CD8-positive, alpha-beta T cell (primary cell): ENCODE measurements at regions of chr4 and their contacts with region 1.

Region 1: GRCh38 chr4:139530833-139531427 is 25.1 kb downstream of the SETD7 start:
- DNase-seq: peak; percentile 34 to 74 (median 63)
- ATAC-seq: peak; percentile 70
- H3K4me3 ChIP-seq: no peak overlapping the region
- H3K4me3 Mint-ChIP-seq: no peak overlapping the region
- H3K27ac ChIP-seq: no peak overlapping the region
- H3K27ac Mint-ChIP-seq: no peak overlapping the region
- H3K4me1 ChIP-seq: no peaks in the 10 kb centered on the region
- H3K4me1 Mint-ChIP-seq: peaks cover 14% of the 10 kb centered on the region
- H3K27me3 ChIP-seq: no peaks in the 10 kb centered on the region
- H3K27me3 Mint-ChIP-seq: no peaks in the 10 kb centered on the region
- CTCF ChIP-seq: peak; percentile 79

Region 2: GRCh38 chr4:139099366-139099982 is 431.5 kb before region 1 on chr4:
- CTCF ChIA-PET with region 1: no interaction called
- POLR2A ChIA-PET with region 1: no interaction called
- intact Hi-C with region 1: loop called (anchors 2 kb)
- DNase-seq: peak; percentile 37 to 89 (median 75)
- ATAC-seq: peak; percentile 80
- H3K4me3 ChIP-seq: no peak overlapping the region
- H3K4me3 Mint-ChIP-seq: no peak overlapping the region
- H3K27ac ChIP-seq: no peak overlapping the region
- H3K27ac Mint-ChIP-seq: no peak overlapping the region
- H3K4me1 ChIP-seq: no peaks in the 10 kb centered on the region
- H3K4me1 Mint-ChIP-seq: peaks cover 2% of the 10 kb centered on the region
- H3K27me3 ChIP-seq: no peaks in the 10 kb centered on the region
- H3K27me3 Mint-ChIP-seq: no peaks in the 10 kb centered on the region
- CTCF ChIP-seq: peak; percentile 76

Region 3: DNA sequence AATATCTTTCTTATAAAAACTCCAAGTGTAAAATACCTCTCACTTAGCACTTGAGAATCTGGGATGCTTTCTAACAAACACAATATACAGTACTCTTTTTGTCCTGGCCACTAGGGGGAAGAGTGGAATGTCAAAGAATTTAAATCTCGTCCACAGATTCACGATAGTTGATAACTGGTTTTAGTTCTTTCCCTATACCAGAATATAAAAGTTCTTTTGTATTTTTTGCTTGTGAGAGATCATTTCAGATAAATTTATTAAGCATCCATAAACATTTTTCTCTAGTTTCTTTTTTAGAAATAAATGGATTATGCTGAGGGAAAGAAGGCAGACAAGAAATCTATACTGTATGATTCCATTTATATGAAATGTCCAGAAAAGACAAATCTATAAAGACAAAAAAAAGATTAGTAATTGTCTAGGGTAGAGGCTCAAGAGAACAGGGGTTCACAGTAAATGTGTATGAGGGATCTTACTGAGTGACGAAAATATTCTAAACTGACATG is 301.3 kb before region 1 on chr4:
- CTCF ChIA-PET with region 1: no interaction called
- POLR2A ChIA-PET with region 1: no interaction called
- intact Hi-C with region 1: loop called (anchors 2 to 5 kb)
- DNase-seq: peak in 3 of 9 experiments; percentile 7 to 74 (median 64)
- ATAC-seq: peak; percentile 70
- H3K4me3 ChIP-seq: no peak overlapping the region
- H3K4me3 Mint-ChIP-seq: no peak overlapping the region
- H3K27ac ChIP-seq: no peak overlapping the region
- H3K27ac Mint-ChIP-seq: no peak overlapping the region
- H3K4me1 ChIP-seq: no peaks in the 10 kb centered on the region
- H3K4me1 Mint-ChIP-seq: no peaks in the 10 kb centered on the region
- H3K27me3 ChIP-seq: no peaks in the 10 kb centered on the region
- H3K27me3 Mint-ChIP-seq: no peaks in the 10 kb centered on the region
- CTCF ChIP-seq: peak; percentile 72

Region 4: GRCh38 chr4:139416073-139416673 is 114.8 kb before region 1 on chr4:
- CTCF ChIA-PET with region 1: interaction called, 15 read pairs
- POLR2A ChIA-PET with region 1: no interaction called
- intact Hi-C with region 1: loop called (anchors 1 kb)
- DNase-seq: peak in 3 of 9 experiments; percentile 28 to 73 (median 64)
- ATAC-seq: peak; percentile 58
- H3K4me3 ChIP-seq: no peak overlapping the region
- H3K4me3 Mint-ChIP-seq: no peak overlapping the region
- H3K27ac ChIP-seq: no peak overlapping the region
- H3K27ac Mint-ChIP-seq: no peak overlapping the region
- H3K4me1 ChIP-seq: no peaks in the 10 kb centered on the region
- H3K4me1 Mint-ChIP-seq: peaks cover 12% of the 10 kb centered on the region
- H3K27me3 ChIP-seq: no peaks in the 10 kb centered on the region
- H3K27me3 Mint-ChIP-seq: no peaks in the 10 kb centered on the region
- CTCF ChIP-seq: peak; percentile 81

Region 5: GRCh38 chr4:139547979-139548378 is 17.0 kb after region 1 on chr4:
- CTCF ChIA-PET with region 1: interaction called, 12 read pairs
- POLR2A ChIA-PET with region 1: no interaction called
- intact Hi-C with region 1: no loop called
- DNase-seq: no peak
- ATAC-seq: no peak
- H3K4me3 ChIP-seq: no peak overlapping the region
- H3K4me3 Mint-ChIP-seq: no peak overlapping the region
- H3K27ac ChIP-seq: no peak overlapping the region
- H3K27ac Mint-ChIP-seq: no peak overlapping the region
- H3K4me1 ChIP-seq: no peaks in the 10 kb centered on the region
- H3K4me1 Mint-ChIP-seq: no peaks in the 10 kb centered on the region
- H3K27me3 ChIP-seq: no peaks in the 10 kb centered on the region
- H3K27me3 Mint-ChIP-seq: no peaks in the 10 kb centered on the region
- CTCF ChIP-seq: no peak

Region 6: DNA sequence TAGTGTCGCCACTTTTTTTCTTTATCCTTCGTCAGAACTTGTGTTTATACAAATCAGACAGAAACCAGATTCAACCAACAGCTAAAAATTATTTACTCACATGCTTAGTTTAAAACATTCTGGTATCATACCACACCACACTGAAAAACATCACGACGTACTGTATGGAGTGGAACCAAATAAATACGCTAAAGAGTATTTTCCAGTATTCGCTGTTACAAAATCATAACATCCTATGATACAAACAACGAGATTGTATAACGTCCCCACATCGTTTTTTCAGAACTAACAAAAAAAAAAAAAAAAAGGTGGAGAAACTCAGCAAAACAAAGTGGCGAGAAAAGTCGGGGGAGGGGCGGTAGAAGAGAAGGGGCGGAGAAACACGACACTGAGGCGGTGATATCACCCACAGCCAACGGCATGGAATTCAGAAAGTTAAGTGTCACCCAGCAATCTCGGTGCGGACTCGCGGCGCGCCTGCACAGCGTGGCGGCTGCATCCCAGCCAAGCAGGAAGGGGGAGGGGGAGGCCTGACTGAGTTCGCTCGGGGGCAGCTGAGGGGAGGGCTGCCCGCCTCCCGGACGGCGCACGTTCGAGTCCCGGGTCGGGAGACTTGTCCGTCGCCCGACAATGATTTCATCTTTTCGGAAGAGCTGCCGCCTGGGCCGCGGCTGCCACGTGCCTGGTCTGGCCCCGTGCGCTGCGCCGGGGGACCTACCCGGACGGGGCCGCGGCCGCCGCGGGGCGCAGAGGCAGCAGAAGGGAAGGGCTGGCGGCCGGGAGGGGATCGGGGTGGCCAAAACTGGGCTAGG is 24.2 kb after region 1 on chr4:
- CTCF ChIA-PET with region 1: interaction called, 6 read pairs
- POLR2A ChIA-PET with region 1: interaction called, 4 read pairs
- intact Hi-C with region 1: loop called in 1 of 2 experiments (anchors 2 kb)
- DNase-seq: peak; percentile 43 to 89 (median 74)
- ATAC-seq: peak; percentile 75
- H3K4me3 ChIP-seq: peak overlapping the region; percentile 79 to 84
- H3K4me3 Mint-ChIP-seq: peak overlapping the region; percentile 94
- H3K27ac ChIP-seq: peak overlapping the region in 1 of 2 experiments; percentile 53
- H3K27ac Mint-ChIP-seq: peak overlapping the region; percentile 95
- H3K4me1 ChIP-seq: peaks cover 9% of the 10 kb centered on the region
- H3K4me1 Mint-ChIP-seq: peaks cover 31% of the 10 kb centered on the region
- H3K27me3 ChIP-seq: peaks cover 0 to 9% of the 10 kb centered on the region in 2 experiments
- H3K27me3 Mint-ChIP-seq: peaks cover 9% of the 10 kb centered on the region
- CTCF ChIP-seq: no peak

Region 7: DNA sequence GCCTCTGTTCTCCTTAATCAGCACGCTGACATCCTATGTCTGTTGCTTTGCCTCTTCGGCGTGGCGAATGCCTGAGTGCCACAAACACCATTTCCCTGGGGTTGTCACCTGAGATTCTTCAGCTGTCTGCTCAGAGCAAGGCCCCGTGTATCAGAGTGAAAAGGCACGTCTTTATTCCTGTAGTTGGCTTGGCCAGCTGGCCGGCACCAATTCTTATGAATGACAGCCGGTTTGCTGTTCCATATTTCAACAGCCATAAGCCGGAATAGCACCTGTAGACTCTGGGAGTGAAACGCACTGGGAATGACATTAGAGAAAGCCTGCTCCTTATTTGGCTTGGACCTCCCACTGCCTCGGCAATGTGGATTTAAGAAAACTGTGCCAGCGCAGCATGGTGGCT is 224.0 kb after region 1 on chr4:
- CTCF ChIA-PET with region 1: no interaction called
- POLR2A ChIA-PET with region 1: no interaction called
- intact Hi-C with region 1: no loop called
- DNase-seq: no peak
- ATAC-seq: no peak
- H3K4me3 ChIP-seq: no peak overlapping the region
- H3K4me3 Mint-ChIP-seq: no peak overlapping the region
- H3K27ac ChIP-seq: no peak overlapping the region
- H3K27ac Mint-ChIP-seq: no peak overlapping the region
- H3K4me1 ChIP-seq: no peaks in the 10 kb centered on the region
- H3K4me1 Mint-ChIP-seq: no peaks in the 10 kb centered on the region
- H3K27me3 ChIP-seq: no peaks in the 10 kb centered on the region
- H3K27me3 Mint-ChIP-seq: no peaks in the 10 kb centered on the region
- CTCF ChIP-seq: no peak